ENCODE measurements at regions of chr2 and their contacts with region 1.

Region 1: DNA sequence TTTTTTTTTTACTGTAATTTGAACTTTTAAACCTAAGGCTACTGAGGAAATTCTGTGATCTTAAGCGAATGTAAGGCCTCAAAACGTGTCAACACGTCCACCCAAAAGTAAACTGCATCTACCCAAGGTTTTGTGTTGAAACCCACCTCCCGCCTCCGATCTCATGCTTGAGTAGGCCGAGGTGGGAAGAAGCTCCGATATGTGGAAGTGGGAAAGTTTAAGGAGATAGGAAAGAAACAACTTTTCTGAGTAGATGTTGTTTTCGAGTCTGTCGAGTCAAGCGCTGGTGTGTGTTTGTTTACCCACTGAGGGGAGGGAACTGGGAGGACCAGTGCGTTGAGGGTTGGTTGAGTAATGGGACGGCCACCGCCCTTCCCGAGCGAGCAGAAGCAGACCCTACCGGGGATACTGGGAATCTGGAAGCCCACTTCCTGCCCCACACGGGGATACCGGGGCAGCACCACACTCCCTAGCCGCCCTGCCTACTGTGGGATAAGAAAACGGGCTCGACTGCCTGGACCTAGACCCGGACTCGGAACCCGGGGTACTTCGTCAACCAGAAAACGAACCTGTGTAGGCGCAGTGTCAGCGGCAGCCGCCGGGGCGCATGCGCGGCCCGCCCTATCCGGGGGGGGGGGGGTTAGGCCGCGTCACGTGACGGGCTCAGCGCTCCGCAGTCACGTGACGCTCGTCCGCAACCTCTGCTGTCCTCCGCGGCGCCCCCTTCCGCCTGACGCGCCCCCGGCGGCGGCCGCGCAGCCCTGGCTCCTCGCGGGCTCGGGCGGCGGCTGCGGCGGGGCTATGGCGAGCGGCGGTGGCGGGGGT is at the start of gene RETREG2:
- DNase-seq: peak; percentile 90
- H3K4me3 Mint-ChIP-seq: peak within 1 kb of the TSS; percentile 82
- H3K27ac Mint-ChIP-seq: peak within 1 kb of the TSS; percentile 93
- H3K4me1 Mint-ChIP-seq: no peaks in the 10 kb centered on the region
- H3K27me3 Mint-ChIP-seq: no peaks in the 10 kb centered on the region
- CTCF ChIP-seq: peak; percentile 32
- total RNA-seq, gene RETREG2: 49.3 and 64.5 TPM in 2 replicates

Region 2: GRCh38 chr2:219206442-219207253 is 28.9 kb after region 1 on chr2 and contains the start of gene ZFAND2B:
- CTCF ChIA-PET with region 1: interaction called, 8 read pairs
- POLR2A ChIA-PET with region 1: interaction called, 64 read pairs
- intact Hi-C with region 1: no loop called
- DNase-seq: peak; percentile 93
- H3K4me3 Mint-ChIP-seq: peak within 1 kb of the TSS; percentile 88
- H3K27ac Mint-ChIP-seq: peak within 1 kb of the TSS; percentile 94
- H3K4me1 Mint-ChIP-seq: peaks cover 15% of the 10 kb centered on the region
- H3K27me3 Mint-ChIP-seq: no peaks in the 10 kb centered on the region
- CTCF ChIP-seq: no peak
- total RNA-seq, gene ZFAND2B: 61.0 and 73.1 TPM in 2 replicates

Region 3: GRCh38 chr2:219229305-219230058 is 51.7 kb after region 1 on chr2 and contains the starts of genes ANKZF1 and ATG9A:
- CTCF ChIA-PET with region 1: interaction called, 8 read pairs
- POLR2A ChIA-PET with region 1: interaction called, 93 read pairs
- intact Hi-C with region 1: loop called (anchors 1 kb)
- DNase-seq: peak; percentile 100
- H3K4me3 Mint-ChIP-seq: peak within 1 kb of the TSS; percentile 100
- H3K27ac Mint-ChIP-seq: peak within 1 kb of the TSS; percentile 99
- H3K4me1 Mint-ChIP-seq: peaks cover 12% of the 10 kb centered on the region
- H3K27me3 Mint-ChIP-seq: no peaks in the 10 kb centered on the region
- CTCF ChIP-seq: no peak
- total RNA-seq, gene ANKZF1: 45.5 and 45.6 TPM in 2 replicates
- total RNA-seq, gene ATG9A: 52.1 and 60.8 TPM in 2 replicates

Region 4: GRCh38 chr2:219253753-219254590 is 76.2 kb after region 1 on chr2 and contains the start of gene TUBA4A:
- CTCF ChIA-PET with region 1: interaction called, 4 read pairs
- POLR2A ChIA-PET with region 1: interaction called, 38 read pairs
- intact Hi-C with region 1: loop called (anchors 2 kb)
- DNase-seq: peak; percentile 84
- H3K4me3 Mint-ChIP-seq: peak within 1 kb of the TSS; percentile 91
- H3K27ac Mint-ChIP-seq: peak within 1 kb of the TSS; percentile 51
- H3K4me1 Mint-ChIP-seq: peaks cover 35% of the 10 kb centered on the region
- H3K27me3 Mint-ChIP-seq: no peaks in the 10 kb centered on the region
- CTCF ChIP-seq: no peak
- total RNA-seq, gene TUBA4A: 37.2 and 80.5 TPM in 2 replicates

Region 5: DNA sequence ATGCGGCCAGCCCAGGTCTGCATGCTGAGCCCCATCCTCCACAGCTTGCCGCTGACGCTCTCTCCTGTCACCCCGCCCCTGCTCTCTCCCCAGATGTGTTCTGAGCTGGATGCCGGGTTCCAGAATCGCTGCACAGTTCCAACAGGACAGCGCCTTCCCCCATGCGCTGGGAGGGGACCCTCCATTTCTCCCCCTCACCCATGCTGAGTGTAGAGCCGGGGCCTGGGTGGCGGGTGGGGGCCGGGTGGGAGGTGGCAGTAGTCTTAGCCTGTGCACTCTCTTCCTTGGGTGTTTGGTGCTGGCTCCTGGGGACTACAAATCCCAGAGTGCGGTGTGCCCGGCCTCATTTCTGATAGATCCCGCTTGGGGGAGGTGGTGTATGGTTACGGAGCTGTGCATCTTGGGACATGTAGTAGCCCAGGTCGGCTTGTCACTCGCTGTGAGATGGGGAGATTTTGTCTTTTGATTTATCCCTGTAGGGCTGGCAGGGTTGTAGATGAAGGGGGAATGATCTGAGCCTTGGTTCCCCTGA is 108.2 kb after region 1 on chr2:
- CTCF ChIA-PET with region 1: interaction called, 69 read pairs
- POLR2A ChIA-PET with region 1: interaction called, 38 read pairs
- intact Hi-C with region 1: no loop called
- DNase-seq: peak; percentile 68
- H3K4me3 Mint-ChIP-seq: peak overlapping the region; percentile 62
- H3K27ac Mint-ChIP-seq: peak overlapping the region; percentile 89
- H3K4me1 Mint-ChIP-seq: peaks cover 39% of the 10 kb centered on the region
- H3K27me3 Mint-ChIP-seq: no peaks in the 10 kb centered on the region
- CTCF ChIP-seq: no peak